Lower leg skin (tissue), 4 donors: ENCODE measurements at regions of chr7 and their contacts with region 1.

Region 1: DNA sequence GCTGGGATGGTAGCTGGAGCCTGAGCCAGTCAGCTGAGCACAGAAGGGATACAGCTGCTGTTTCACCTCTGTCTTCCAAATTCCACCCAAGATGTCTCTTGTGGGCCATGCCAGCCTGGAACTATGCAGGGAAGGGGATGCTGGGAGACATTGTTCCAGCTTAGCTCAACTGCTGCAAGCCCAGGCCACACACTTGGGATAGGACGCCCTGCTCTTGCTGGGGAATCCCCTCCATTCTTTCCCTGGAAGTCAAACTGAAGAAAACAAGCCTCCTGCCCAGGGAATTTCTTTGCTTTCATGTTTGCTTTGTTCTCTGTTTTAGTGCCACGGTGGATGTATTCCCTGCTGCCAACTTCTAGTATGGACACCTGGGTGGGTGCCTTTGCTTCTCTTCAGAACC is 55.2 kb upstream of the CDK13 start:
- DNase-seq: no peak
- H3K4me3 ChIP-seq: no peak overlapping the region
- CTCF ChIP-seq: no peak
- POLR2A ChIP-seq: no peak

Region 2: DNA sequence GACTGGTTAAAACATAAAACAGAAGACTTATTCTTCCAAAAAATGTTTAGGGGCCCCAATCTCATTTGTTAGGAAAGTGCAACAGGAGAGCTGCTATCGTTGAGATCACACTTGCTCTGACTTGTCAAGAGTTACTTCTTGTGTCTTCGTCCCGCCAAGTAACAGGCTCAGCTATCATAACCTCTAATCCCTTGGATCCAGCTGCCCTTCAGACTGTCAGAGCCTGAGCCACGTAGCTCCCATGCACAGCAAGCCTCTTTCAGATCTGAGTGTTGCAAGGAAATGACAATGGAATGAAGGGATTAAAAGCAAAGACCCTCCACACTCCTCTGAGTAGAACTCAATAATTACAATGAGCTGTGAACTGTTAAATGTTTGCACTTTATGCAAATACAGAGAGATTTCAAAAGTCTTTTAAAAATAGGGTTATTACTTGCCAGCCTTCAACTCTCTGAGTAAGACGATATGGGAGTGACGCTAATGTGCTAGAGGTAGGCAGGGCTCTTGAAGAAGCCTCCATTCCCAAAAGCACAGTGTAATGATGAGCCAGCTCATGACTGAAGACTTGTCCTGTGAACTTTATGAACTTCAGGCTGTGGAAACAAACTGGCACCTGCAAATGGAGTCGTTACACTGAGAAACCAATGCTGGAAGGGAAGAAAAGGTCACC is 26.7 kb after region 1 on chr7:
- intact Hi-C with region 1: no loop called
- DNase-seq: peak in 1 of 2 donors; percentile 14
- H3K4me3 ChIP-seq: no peak overlapping the region
- CTCF ChIP-seq: no peak
- POLR2A ChIP-seq: no peak

Region 3: GRCh38 chr7:40008223-40008815 is 113.4 kb after region 1 on chr7:
- intact Hi-C with region 1: no loop called
- DNase-seq: no peak
- H3K4me3 ChIP-seq: no peak overlapping the region
- CTCF ChIP-seq: no peak
- POLR2A ChIP-seq: no peak

Region 4: DNA sequence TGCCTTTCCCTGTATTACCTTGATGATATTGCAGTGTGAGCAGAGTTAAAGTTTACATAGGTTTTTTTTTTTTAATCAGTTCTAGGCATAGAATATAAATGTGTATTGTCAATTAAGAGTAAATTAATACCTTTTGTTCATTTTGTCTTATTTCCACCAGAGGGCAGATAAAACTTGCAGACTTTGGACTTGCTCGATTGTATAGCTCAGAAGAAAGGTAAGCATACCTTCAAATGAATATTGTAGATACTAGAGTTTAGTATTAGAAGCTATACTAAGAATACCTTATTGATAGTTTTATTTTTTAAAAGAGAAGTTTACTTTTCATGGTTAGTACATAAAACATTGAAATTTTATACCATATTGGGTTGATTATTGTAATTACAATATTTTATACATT is 152.8 kb after region 1 on chr7:
- intact Hi-C with region 1: loop called (anchors 5 kb)
- DNase-seq: no peak
- H3K4me3 ChIP-seq: no peak overlapping the region
- CTCF ChIP-seq: no peak
- POLR2A ChIP-seq: no peak